Transverse colon (tissue), 4 donors: ENCODE measurements at regions of chr2 and their contacts with region 1.

Region 1: GRCh38 chr2:234722176-234722575 is 225.3 kb upstream of the ARL4C start:
- DNase-seq: no peak
- H3K4me3 ChIP-seq: no peak overlapping the region
- H3K27ac ChIP-seq: no peak overlapping the region
- H3K4me1 ChIP-seq: peaks cover 0 to 24% (median 12%) of the 10 kb centered on the region in 4 donors
- H3K27me3 ChIP-seq: no peaks in the 10 kb centered on the region
- CTCF ChIP-seq: no peak
- EP300 ChIP-seq: no peak
- POLR2A ChIP-seq: no peak

Region 2: GRCh38 chr2:233905945-233906344 is 816.2 kb before region 1 on chr2:
- in situ Hi-C with region 1: no loop called
- intact Hi-C with region 1: loop called (anchors 5 kb)
- DNase-seq: no peak
- H3K4me3 ChIP-seq: no peak overlapping the region
- H3K27ac ChIP-seq: no peak overlapping the region
- H3K4me1 ChIP-seq: no peaks in the 10 kb centered on the region
- H3K27me3 ChIP-seq: peaks cover 3% of the 10 kb centered on the region
- CTCF ChIP-seq: no peak
- EP300 ChIP-seq: no peak
- POLR2A ChIP-seq: no peak

Region 3: GRCh38 chr2:234587341-234588053 is 134.7 kb before region 1 on chr2:
- in situ Hi-C with region 1: no loop called
- intact Hi-C with region 1: no loop called
- DNase-seq: no peak
- H3K4me3 ChIP-seq: no peak overlapping the region
- H3K27ac ChIP-seq: no peak overlapping the region
- H3K4me1 ChIP-seq: no peaks in the 10 kb centered on the region
- H3K27me3 ChIP-seq: no peaks in the 10 kb centered on the region
- CTCF ChIP-seq: no peak
- EP300 ChIP-seq: no peak
- POLR2A ChIP-seq: no peak